ENCODE measurements at regions of chr7 and their contacts with region 1.

Region 1: GRCh38 chr7:83936056-83936708 is 258.4 kb downstream of the SEMA3A start:
- DNase-seq: no peak
- ATAC-seq: peak; percentile 42
- H3K4me3 Mint-ChIP-seq: no peak overlapping the region
- H3K27ac Mint-ChIP-seq: no peak overlapping the region
- H3K4me1 Mint-ChIP-seq: no peaks in the 10 kb centered on the region
- H3K27me3 Mint-ChIP-seq: no peaks in the 10 kb centered on the region
- CTCF ChIP-seq: no peak

Region 2: GRCh38 chr7:84302949-84303348 is 366.8 kb after region 1 on chr7:
- CTCF ChIA-PET with region 1: no interaction called
- POLR2A ChIA-PET with region 1: no interaction called
- intact Hi-C with region 1: no loop called
- DNase-seq: no peak
- ATAC-seq: no peak
- H3K4me3 Mint-ChIP-seq: no peak overlapping the region
- H3K27ac Mint-ChIP-seq: no peak overlapping the region
- H3K4me1 Mint-ChIP-seq: no peaks in the 10 kb centered on the region
- H3K27me3 Mint-ChIP-seq: no peaks in the 10 kb centered on the region
- CTCF ChIP-seq: no peak

Region 3: DNA sequence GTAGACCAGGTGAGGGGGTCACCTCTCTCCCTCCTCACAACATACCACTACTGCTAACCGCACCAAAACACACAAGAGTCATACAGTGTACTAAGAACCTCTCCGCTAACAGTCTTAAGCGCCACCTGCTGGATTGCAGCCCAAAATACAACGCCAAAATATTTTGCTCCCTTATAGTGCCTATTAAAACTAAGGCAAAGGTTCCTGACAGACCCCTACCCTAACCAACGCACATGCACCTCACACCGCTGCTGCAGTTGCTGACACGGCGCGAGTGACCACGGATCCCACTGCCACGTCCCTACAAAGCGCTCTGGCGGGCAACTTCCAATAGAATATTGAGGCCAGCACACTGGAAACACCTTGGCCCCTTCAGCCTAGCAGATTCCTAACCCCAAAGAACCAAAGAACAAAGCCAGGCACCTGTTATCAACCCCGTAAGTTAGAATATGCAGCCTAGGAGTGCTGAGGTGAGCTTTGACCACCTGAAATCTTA is 1814.3 kb after region 1 on chr7:
- CTCF ChIA-PET with region 1: no interaction called
- POLR2A ChIA-PET with region 1: no interaction called
- intact Hi-C with region 1: loop called (anchors 5 kb)
- DNase-seq: no peak
- ATAC-seq: peak; percentile 25
- H3K4me3 Mint-ChIP-seq: no peak overlapping the region
- H3K27ac Mint-ChIP-seq: no peak overlapping the region
- H3K4me1 Mint-ChIP-seq: no peaks in the 10 kb centered on the region
- H3K27me3 Mint-ChIP-seq: no peaks in the 10 kb centered on the region
- CTCF ChIP-seq: no peak

Measured in activated B cell treated with CpG ODN at 0.5 μM for 24 hours (primary cell).